B cell (primary cell): ENCODE measurements at regions of chr1 and their contacts with region 1.

Region 1: DNA sequence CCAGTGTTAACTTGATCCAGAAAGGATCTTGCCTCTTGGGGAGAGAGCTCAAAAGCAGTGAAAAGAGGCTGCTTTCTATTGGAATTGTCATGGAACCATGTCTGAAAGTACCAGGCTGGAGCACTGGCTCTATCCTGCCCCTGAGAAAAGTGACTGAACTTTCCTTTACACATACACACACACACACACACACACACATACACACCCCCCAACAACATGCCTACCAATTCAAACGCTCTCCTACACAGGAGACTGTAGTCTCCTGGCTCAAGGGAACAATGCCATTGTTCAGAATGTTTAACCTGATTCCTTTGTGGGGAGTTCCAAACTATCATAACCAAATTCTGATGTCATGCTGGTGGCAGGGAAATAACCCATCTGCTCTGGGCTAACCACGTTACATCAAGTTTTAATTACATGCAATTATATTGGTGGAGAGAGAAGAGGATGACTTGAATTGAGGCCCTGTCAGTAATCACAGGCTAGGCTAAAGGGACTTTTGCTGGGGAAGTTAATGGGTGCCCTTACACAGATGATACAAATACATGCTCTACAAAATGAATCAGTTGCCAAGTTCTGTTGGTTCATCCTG is 52.3 kb upstream of the DUSP10 start:
- DNase-seq: peak; percentile 92
- ATAC-seq: peak; percentile 71
- H3K4me3 ChIP-seq: peak overlapping the region in 2 of 5 experiments; percentile 2 to 44
- H3K4me3 Mint-ChIP-seq: peak overlapping the region; percentile 69
- H3K27ac ChIP-seq: peak overlapping the region; percentile 87 to 99
- H3K27ac Mint-ChIP-seq: peak overlapping the region; percentile 92
- H3K4me1 ChIP-seq: peaks cover 36 to 37% of the 10 kb centered on the region in 2 donors
- H3K4me1 Mint-ChIP-seq: peaks cover 45% of the 10 kb centered on the region
- H3K27me3 ChIP-seq: no peaks in the 10 kb centered on the region
- H3K27me3 Mint-ChIP-seq: no peaks in the 10 kb centered on the region
- CTCF ChIP-seq: no peak

Region 2: DNA sequence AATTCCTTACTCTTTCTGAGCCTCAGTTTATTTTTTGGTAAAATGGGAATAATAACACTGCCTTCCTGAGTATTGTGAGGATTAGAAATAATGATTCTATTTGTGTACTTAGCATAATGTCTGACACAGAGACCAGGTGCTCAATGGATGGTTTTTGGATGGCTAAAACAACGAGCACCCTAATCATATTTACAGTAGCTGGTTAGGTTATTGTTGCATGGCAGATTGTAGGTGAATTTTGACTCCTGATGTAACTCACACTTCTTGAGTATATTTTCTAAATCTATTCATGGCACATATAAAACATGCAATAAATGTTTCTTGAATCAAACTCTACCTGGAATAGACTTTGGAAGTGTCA is 40.4 kb before region 1 on chr1:
- CTCF ChIA-PET with region 1: interaction called, 3 read pairs
- POLR2A ChIA-PET with region 1: no interaction called
- intact Hi-C with region 1: loop called (anchors 1 kb)
- DNase-seq: no peak
- ATAC-seq: no peak
- H3K4me3 ChIP-seq: peak overlapping the region in 1 of 5 experiments; percentile 43
- H3K4me3 Mint-ChIP-seq: peak overlapping the region; percentile 82
- H3K27ac ChIP-seq: no peak overlapping the region
- H3K27ac Mint-ChIP-seq: peak overlapping the region; percentile 85
- H3K4me1 ChIP-seq: peaks cover 15 to 22% of the 10 kb centered on the region in 2 donors
- H3K4me1 Mint-ChIP-seq: peaks cover 36% of the 10 kb centered on the region
- H3K27me3 ChIP-seq: no peaks in the 10 kb centered on the region
- H3K27me3 Mint-ChIP-seq: no peaks in the 10 kb centered on the region
- CTCF ChIP-seq: no peak

Region 3: DNA sequence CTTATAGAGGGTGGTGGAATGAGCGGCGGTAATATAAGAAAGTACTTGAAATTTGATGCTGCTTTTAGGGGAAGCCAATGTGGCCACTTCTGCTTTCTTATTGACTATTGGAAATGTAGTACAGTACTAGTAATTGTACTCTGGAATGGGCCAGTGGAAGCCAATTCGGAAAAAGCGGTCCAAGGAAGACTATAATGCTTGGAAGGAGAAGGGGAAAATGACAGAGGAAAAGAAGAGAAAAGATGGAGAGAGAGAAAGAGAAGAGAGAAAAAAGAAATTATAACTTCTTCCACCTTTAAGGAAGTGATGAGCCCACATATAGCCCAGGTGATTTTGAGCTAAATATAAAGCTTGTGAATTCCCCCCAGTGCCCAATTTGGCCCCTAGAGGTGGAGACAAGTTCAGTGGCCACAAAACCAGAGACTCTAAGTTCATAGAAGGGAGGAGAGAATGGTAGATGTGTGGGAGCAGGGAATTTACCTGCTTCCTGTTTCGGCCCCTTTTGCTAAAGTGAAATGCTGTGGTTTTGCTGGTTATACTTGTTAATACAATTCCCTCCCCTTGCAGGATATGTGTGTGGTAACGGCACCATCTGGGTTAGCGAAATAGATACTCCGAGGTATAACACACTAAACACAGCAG is 16.6 kb before region 1 on chr1:
- CTCF ChIA-PET with region 1: interaction called, 18 read pairs
- POLR2A ChIA-PET with region 1: interaction called, 13 read pairs
- intact Hi-C with region 1: loop called (anchors 1 kb)
- DNase-seq: peak; percentile 91
- ATAC-seq: peak; percentile 62
- H3K4me3 ChIP-seq: peak overlapping the region in 4 of 5 experiments; percentile 3 to 49 (median 26)
- H3K4me3 Mint-ChIP-seq: peak overlapping the region; percentile 79
- H3K27ac ChIP-seq: peak overlapping the region; percentile 80 to 88
- H3K27ac Mint-ChIP-seq: peak overlapping the region; percentile 91
- H3K4me1 ChIP-seq: peaks cover 54 to 64% of the 10 kb centered on the region in 2 donors
- H3K4me1 Mint-ChIP-seq: peaks cover 65% of the 10 kb centered on the region
- H3K27me3 ChIP-seq: no peaks in the 10 kb centered on the region
- H3K27me3 Mint-ChIP-seq: no peaks in the 10 kb centered on the region
- CTCF ChIP-seq: no peak

Region 4: DNA sequence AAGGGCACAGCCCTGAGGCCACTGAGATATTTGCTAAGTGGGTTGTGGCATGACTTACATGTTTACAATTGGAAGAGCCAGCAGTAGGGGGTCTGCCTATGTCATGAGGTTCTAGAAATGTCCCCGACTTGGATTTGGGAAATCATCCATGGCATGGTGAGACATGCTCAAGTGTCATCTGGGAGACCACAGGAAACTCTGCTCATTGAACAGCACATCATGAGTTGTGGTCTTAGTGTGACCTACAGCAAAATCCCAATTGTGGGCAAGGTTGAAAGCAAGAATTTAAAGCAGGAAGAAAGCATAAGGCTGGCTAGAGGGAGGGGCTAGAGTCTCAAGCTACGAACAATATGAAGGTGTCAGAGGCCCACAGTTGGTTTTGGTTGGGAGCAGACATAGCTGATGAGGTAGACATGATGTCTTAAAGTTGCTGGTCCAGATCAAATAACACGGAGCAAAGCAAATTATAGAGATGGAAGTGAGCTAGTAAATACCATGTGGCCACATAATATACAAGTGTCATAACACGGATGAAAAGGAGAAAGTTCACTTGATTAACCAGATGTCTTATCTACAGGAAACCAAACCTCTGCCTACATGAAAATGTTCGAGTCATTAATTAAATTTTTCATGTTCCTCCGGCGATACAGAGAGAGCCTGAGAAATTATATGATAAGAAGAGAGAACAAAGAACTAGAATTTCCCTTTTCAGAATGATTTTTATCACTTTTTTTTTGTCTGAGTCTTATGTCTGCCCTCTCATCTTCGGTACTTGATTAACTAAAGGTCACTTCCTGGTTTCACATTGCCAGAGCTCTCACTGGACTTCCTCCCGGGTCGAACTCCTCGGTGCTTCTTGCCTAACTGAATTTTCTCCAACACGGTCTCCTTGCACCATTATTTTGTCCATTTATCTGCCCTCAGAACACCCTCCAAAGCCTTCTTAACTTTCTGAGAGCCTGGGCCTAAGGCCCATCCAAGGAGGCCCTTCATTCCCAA is 15.2 kb after region 1 on chr1:
- CTCF ChIA-PET with region 1: interaction called, 7 read pairs
- POLR2A ChIA-PET with region 1: interaction called, 3 read pairs
- intact Hi-C with region 1: loop called (anchors 1 kb)
- DNase-seq: peak; percentile 45
- ATAC-seq: peak; percentile 74
- H3K4me3 ChIP-seq: peak overlapping the region in 1 of 5 experiments; percentile 33
- H3K4me3 Mint-ChIP-seq: peak overlapping the region; percentile 38
- H3K27ac ChIP-seq: peak overlapping the region in 1 of 2 donors; percentile 2
- H3K27ac Mint-ChIP-seq: peak overlapping the region; percentile 81
- H3K4me1 ChIP-seq: peaks cover 43 to 48% of the 10 kb centered on the region in 2 donors
- H3K4me1 Mint-ChIP-seq: peaks cover 66% of the 10 kb centered on the region
- H3K27me3 ChIP-seq: no peaks in the 10 kb centered on the region
- H3K27me3 Mint-ChIP-seq: no peaks in the 10 kb centered on the region
- CTCF ChIP-seq: no peak

Region 5: GRCh38 chr1:221939607-221940006 is 145.4 kb after region 1 on chr1:
- CTCF ChIA-PET with region 1: interaction called, 3 read pairs
- POLR2A ChIA-PET with region 1: no interaction called
- intact Hi-C with region 1: loop called (anchors 1 kb)
- DNase-seq: peak; percentile 85
- ATAC-seq: peak; percentile 95
- H3K4me3 ChIP-seq: no peak overlapping the region
- H3K4me3 Mint-ChIP-seq: peak overlapping the region; percentile 29
- H3K27ac ChIP-seq: peak overlapping the region in 1 of 2 donors; percentile 27
- H3K27ac Mint-ChIP-seq: peak overlapping the region; percentile 76
- H3K4me1 ChIP-seq: peaks cover 22 to 27% of the 10 kb centered on the region in 2 donors
- H3K4me1 Mint-ChIP-seq: peaks cover 38% of the 10 kb centered on the region
- H3K27me3 ChIP-seq: no peaks in the 10 kb centered on the region
- H3K27me3 Mint-ChIP-seq: no peaks in the 10 kb centered on the region
- CTCF ChIP-seq: peak; percentile 38

Region 6: DNA sequence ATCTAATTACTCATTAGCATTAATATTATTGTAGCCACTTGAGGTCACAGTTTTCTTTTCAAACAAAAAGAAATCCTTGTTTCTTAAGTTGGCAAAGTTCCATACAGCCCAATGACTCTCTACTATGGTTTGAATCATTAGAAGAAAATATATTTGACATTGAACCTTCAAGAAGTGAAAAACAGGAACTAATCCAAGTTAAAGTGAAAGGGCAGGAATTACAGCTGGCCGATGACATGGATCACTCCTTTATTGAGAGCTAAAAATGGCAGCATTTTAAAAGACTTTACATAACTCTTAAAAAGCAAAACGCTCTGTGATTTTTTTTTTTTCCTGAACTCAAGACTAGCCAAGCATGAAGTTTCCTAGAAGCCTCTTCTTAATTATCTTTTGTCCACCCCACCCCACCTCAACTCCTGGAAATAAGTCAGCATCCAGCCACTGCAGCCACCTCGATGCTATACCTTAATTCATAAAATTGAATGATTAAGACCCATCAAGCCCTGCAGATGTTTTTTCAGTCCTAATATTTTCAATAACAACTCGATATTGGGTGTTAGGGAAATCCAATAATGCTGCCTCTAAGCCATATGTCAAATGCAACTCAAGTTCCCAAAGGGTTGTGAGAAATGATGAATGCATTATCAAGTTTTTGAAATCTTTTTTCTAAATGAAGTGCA is 430.6 kb after region 1 on chr1:
- CTCF ChIA-PET with region 1: no interaction called
- POLR2A ChIA-PET with region 1: no interaction called
- intact Hi-C with region 1: no loop called
- DNase-seq: no peak
- ATAC-seq: no peak
- H3K4me3 ChIP-seq: no peak overlapping the region
- H3K4me3 Mint-ChIP-seq: no peak overlapping the region
- H3K27ac ChIP-seq: no peak overlapping the region
- H3K27ac Mint-ChIP-seq: no peak overlapping the region
- H3K4me1 ChIP-seq: no peaks in the 10 kb centered on the region
- H3K4me1 Mint-ChIP-seq: no peaks in the 10 kb centered on the region
- H3K27me3 ChIP-seq: no peaks in the 10 kb centered on the region
- H3K27me3 Mint-ChIP-seq: peaks cover 17% of the 10 kb centered on the region
- CTCF ChIP-seq: no peak